ENCODE measurements at regions of chr1 and their contacts with region 1.

Region 1: GRCh38 chr1:39720094-39720999 is 18.3 kb upstream of the PPIE start:
- DNase-seq: peak; percentile 83
- ATAC-seq: peak; percentile 54
- H3K4me3 ChIP-seq: no peak overlapping the region; the same call in 1 of the 2 replicates
- H3K27ac ChIP-seq: no peak overlapping the region
- H3K4me1 ChIP-seq: peaks cover 12% of the 10 kb centered on the region
- H3K27me3 ChIP-seq: peaks cover 13% of the 10 kb centered on the region; the same call in 1 of the 2 replicates
- CTCF ChIP-seq: peak; percentile 80

Region 2: GRCh38 chr1:39098546-39099250 is 621.6 kb before region 1 on chr1:
- CTCF ChIA-PET with region 1: no interaction called
- POLR2A ChIA-PET with region 1: no interaction called
- intact Hi-C with region 1: loop called (anchors 10 kb)
- DNase-seq: peak; percentile 87
- ATAC-seq: peak; percentile 52
- H3K4me3 ChIP-seq: no peak overlapping the region
- H3K27ac ChIP-seq: no peak overlapping the region
- H3K4me1 ChIP-seq: peaks cover 26% of the 10 kb centered on the region
- H3K27me3 ChIP-seq: no peaks in the 10 kb centered on the region
- CTCF ChIP-seq: peak; percentile 91

Region 3: DNA sequence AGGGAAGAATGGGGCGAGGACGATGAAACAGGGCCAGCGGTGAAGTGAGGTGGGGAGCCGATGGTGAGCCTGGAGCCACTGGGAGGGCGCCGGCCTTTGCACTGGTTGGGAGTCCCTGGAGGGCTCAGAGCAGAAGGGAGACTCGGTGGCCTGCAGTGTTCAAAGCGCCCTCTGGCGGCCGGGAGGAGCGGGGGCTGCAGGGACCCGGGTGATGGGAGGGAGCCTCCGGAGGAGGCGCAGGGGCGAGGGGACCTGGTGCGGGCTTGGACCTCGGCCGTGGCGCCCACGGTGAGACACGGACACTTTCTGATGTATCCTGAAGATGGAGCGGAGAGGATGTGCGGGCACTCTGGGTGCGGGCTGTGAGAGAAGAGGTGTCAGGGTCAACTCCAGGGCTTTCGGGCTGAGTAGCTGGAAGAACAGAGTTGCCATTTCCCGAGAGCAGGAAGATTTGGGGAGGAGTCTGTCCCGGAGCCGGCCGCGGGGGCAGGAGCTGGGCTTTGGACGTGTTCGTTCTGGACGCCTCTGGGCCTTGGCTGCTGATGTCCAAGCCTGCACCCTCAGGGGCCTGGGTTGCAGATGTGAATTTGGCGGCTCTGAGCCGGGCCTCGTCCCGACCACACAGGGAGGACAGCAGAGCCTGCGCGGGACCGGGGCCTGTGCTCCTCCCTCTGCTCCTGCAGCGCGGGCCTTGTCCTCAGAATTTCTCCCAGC is 110.6 kb before region 1 on chr1:
- CTCF ChIA-PET with region 1: interaction called, 24 read pairs
- POLR2A ChIA-PET with region 1: no interaction called
- intact Hi-C with region 1: loop called (anchors 2 kb)
- DNase-seq: peak; percentile 34
- ATAC-seq: peak; percentile 31; the same call in 1 of the 2 replicates
- H3K4me3 ChIP-seq: no peak overlapping the region
- H3K27ac ChIP-seq: no peak overlapping the region
- H3K4me1 ChIP-seq: peaks cover 6% of the 10 kb centered on the region; the same call in 1 of the 2 replicates
- H3K27me3 ChIP-seq: no peaks in the 10 kb centered on the region
- CTCF ChIP-seq: peak; percentile 82

Region 4: DNA sequence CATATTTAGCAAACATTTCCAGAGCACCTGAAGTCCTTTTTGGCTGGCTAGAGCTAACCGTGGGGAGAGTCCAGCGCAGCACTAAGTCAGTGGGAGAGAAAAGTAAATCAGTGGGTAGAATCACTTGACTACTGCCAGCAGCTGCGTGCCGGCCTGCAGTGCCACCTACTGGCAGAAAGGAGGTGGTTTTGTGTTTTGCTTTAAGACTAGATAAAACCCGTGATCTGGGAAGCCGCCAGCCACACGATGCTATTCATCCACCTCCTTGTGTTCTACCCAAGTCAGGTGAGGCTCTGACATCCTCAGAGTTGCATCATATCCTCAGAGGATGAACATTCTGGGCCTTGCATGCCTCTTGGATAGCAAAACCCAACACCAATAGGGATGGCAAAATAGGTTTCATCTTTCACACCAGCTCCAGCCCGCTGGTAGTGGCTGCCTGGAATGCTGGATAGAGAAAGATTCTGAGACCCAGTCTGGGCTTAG is 66.8 kb before region 1 on chr1:
- CTCF ChIA-PET with region 1: no interaction called
- POLR2A ChIA-PET with region 1: no interaction called
- intact Hi-C with region 1: loop called (anchors 5 kb)
- DNase-seq: peak; percentile 81
- ATAC-seq: peak; percentile 88
- H3K4me3 ChIP-seq: no peak overlapping the region
- H3K27ac ChIP-seq: no peak overlapping the region
- H3K4me1 ChIP-seq: no peaks in the 10 kb centered on the region
- H3K27me3 ChIP-seq: no peaks in the 10 kb centered on the region
- CTCF ChIP-seq: peak; percentile 92

Region 5: DNA sequence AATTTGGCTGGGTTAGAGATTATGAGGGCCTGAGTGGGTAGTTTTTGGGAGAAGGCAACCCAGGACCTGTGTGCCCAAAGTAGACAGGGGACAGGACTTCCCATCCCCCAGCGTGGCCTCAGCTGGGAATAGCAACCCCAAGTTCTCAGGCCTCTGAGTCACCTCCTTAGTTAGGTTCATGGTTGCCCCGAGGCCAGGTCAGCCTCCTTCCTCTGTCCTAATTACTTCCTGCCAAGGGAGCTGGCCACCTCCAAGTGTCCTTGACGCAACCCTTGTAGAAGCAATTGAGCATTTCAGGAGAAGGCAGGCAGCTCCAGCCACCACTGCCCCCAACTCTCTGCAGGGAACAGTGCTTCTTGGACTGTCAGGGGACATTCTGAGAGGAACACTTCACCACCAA is 43.4 kb before region 1 on chr1:
- CTCF ChIA-PET with region 1: no interaction called
- POLR2A ChIA-PET with region 1: no interaction called
- intact Hi-C with region 1: no loop called
- DNase-seq: no peak
- ATAC-seq: no peak
- H3K4me3 ChIP-seq: no peak overlapping the region
- H3K27ac ChIP-seq: no peak overlapping the region
- H3K4me1 ChIP-seq: no peaks in the 10 kb centered on the region
- H3K27me3 ChIP-seq: peaks cover 14% of the 10 kb centered on the region
- CTCF ChIP-seq: no peak

Region 6: GRCh38 chr1:39701049-39701439 is 19.3 kb before region 1 on chr1:
- CTCF ChIA-PET with region 1: no interaction called
- POLR2A ChIA-PET with region 1: no interaction called
- intact Hi-C with region 1: loop called (anchors 2 kb)
- DNase-seq: peak; percentile 8
- ATAC-seq: no peak
- H3K4me3 ChIP-seq: no peak overlapping the region
- H3K27ac ChIP-seq: no peak overlapping the region
- H3K4me1 ChIP-seq: no peaks in the 10 kb centered on the region
- H3K27me3 ChIP-seq: peaks cover 19% of the 10 kb centered on the region
- CTCF ChIP-seq: no peak

Region 7: DNA sequence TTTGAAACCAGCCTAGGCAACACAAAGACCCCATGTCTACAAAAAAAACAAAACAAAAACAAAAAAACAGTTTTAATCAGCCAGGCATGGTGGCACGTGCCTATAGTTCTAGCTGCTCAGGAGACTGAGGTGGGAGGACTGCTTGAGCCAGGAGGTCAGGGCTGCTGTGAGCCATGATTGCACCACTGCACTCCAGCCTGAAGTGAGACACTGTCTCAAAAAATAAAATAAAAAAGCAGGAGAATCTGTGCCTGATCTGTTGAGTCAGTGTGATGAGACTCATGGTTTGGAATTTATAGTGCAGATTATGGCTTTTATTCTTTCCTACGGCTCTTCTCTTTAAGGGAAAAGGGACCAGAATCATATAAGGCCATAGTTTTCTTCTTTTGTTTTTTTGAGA is 146.4 kb after region 1 on chr1:
- CTCF ChIA-PET with region 1: no interaction called
- POLR2A ChIA-PET with region 1: no interaction called
- intact Hi-C with region 1: no loop called
- DNase-seq: peak; percentile 50
- ATAC-seq: peak; percentile 97
- H3K4me3 ChIP-seq: no peak overlapping the region
- H3K27ac ChIP-seq: no peak overlapping the region
- H3K4me1 ChIP-seq: peaks cover 11% of the 10 kb centered on the region; the same call in 1 of the 2 replicates
- H3K27me3 ChIP-seq: no peaks in the 10 kb centered on the region
- CTCF ChIP-seq: no peak